Ascending aorta (tissue), 2 donors: ENCODE measurements at regions of chr2 and their contacts with region 1.

Region 1: DNA sequence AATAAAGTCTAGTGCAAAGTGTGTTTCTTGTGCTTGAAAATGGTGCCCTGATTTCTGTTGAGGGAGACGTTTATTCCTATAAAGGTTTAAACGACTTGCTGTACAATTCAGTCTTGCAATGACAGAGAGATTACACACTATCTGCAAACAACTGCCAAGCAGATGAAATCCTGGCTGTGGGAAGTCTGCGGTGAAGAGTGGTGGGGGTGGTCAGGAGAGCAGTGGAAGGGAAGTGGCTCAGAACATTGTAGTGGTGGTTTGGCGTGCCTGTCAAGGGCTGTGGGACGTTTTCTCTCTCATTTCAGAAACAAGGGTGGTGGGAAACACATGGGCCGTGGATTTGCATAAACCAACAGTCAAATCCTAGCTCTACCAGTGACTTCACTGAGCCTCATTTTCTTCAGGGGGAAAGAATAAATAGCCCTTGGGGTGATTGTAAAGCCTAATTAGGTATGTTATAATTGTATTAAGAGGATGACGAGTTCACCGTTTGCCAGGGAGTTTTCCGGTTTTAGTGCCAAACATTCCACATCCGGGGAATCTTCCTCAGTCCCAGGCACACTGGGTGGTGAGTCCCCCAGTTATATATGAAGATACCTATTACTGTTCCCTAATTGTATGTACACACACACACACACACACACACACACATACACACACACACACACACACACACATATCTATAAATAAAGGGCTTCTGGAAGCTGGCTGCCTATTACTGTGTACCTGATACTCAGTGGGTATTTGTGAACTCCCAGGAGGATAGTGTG is 115.0 kb downstream of the SPTBN1 start:
- DNase-seq: peak in 1 of 2 donors; percentile 76
- H3K4me3 ChIP-seq: no peak overlapping the region
- H3K27ac ChIP-seq: peak overlapping the region; percentile 75 to 84
- H3K4me1 ChIP-seq: peaks cover 15 to 56% of the 10 kb centered on the region in 2 donors
- H3K27me3 ChIP-seq: no peaks in the 10 kb centered on the region
- CTCF ChIP-seq: no peak

Region 2: GRCh38 chr2:54330162-54330925 is 240.8 kb before region 1 on chr2:
- intact Hi-C with region 1: no loop called
- DNase-seq: peak; percentile 87 to 98
- H3K4me3 ChIP-seq: peak overlapping the region; percentile 67 to 69
- H3K27ac ChIP-seq: peak overlapping the region; percentile 88 to 96
- H3K4me1 ChIP-seq: peaks cover 2% of the 10 kb centered on the region in 2 donors
- H3K27me3 ChIP-seq: no peaks in the 10 kb centered on the region
- CTCF ChIP-seq: no peak

Region 3: GRCh38 chr2:54613794-54614257 is 42.7 kb after region 1 on chr2:
- intact Hi-C with region 1: loop called (anchors 5 kb)
- DNase-seq: no peak
- H3K4me3 ChIP-seq: no peak overlapping the region
- H3K27ac ChIP-seq: peak overlapping the region; percentile 3 to 62
- H3K4me1 ChIP-seq: peaks cover 12 to 18% of the 10 kb centered on the region in 2 donors
- H3K27me3 ChIP-seq: no peaks in the 10 kb centered on the region
- CTCF ChIP-seq: no peak